Caco-2 (cell line): ENCODE measurements at regions of chr7 and their contacts with region 1.

Region 1: GRCh38 chr7:87933945-87934698 is at the start of gene ADAM22:
- DNase-seq: peak; percentile 90
- H3K4me3 ChIP-seq: peak within 1 kb of the TSS; percentile 81
- H3K4me3 Mint-ChIP-seq: peak within 1 kb of the TSS; percentile 91
- H3K27ac Mint-ChIP-seq: peak within 1 kb of the TSS; percentile 52
- H3K4me1 ChIP-seq: peaks cover 12% of the 10 kb centered on the region
- H3K4me1 Mint-ChIP-seq: peaks cover 12% of the 10 kb centered on the region
- H3K27me3 ChIP-seq: no peaks in the 10 kb centered on the region
- H3K27me3 Mint-ChIP-seq: peaks cover 8% of the 10 kb centered on the region
- CTCF ChIP-seq: no peak
- total RNA-seq, gene ADAM22: 10.1 and 15.7 TPM in 2 replicates

Region 2: DNA sequence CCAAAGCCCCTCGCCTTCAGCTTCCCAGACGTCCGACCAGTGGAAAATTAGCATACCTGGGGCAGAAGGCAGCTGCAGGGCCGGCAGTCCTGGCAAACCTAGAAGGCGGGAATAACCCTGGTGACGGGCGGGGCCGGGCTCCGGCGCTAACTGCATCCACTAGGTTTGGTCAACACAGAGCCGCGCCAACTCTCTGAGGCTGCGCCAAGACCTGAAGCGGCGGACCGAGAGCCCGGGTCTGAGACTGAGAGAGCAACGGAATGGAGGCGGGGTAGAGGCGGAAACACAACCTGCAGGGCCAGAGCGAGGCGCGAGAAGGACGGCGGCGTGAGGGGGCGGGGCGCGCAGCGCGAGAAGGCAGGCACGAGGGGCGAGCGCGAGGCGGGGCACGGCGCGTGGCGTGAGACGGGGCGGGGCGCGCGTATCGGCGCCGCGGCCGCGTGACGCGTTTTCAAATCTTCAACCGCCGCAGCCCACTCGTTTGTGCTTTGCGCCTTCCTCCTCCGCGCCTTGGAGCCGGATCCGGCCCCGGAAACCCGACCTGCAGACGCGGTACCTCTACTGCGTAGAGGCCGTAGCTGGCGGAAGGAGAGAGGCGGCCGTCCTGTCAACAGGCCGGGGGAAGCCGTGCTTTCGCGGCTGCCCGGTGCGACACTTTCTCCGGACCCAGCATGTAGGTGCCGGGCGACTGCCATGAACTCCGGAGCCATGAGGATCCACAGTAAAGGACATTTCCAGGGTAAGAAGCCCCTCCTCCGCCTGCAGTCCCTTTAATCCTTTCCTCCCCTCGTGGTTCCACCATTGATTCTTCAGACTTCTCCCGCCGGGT is 57.9 kb before region 1 on chr7 and contains the starts of genes DBF4 and SLC25A40:
- CTCF ChIA-PET with region 1: no interaction called
- POLR2A ChIA-PET with region 1: no interaction called
- intact Hi-C with region 1: loop called (anchors 1 kb)
- DNase-seq: peak; percentile 98 to 99
- H3K4me3 ChIP-seq: peak within 1 kb of the TSS; percentile 61
- H3K4me3 Mint-ChIP-seq: peak within 1 kb of the TSS; percentile 70
- H3K27ac Mint-ChIP-seq: peak within 1 kb of the TSS; percentile 99
- H3K4me1 ChIP-seq: peaks cover 20% of the 10 kb centered on the region
- H3K4me1 Mint-ChIP-seq: peaks cover 28% of the 10 kb centered on the region
- H3K27me3 ChIP-seq: no peaks in the 10 kb centered on the region
- H3K27me3 Mint-ChIP-seq: no peaks in the 10 kb centered on the region
- CTCF ChIP-seq: no peak
- total RNA-seq, gene DBF4: 55.0 and 62.8 TPM in 2 replicates
- total RNA-seq, gene SLC25A40: 21.1 and 21.8 TPM in 2 replicates

Region 3: GRCh38 chr7:87895363-87895762 is 38.8 kb before region 1 on chr7:
- CTCF ChIA-PET with region 1: no interaction called
- POLR2A ChIA-PET with region 1: no interaction called
- intact Hi-C with region 1: no loop called
- DNase-seq: no peak
- H3K4me3 ChIP-seq: no peak overlapping the region
- H3K4me3 Mint-ChIP-seq: no peak overlapping the region
- H3K27ac Mint-ChIP-seq: no peak overlapping the region
- H3K4me1 ChIP-seq: no peaks in the 10 kb centered on the region
- H3K4me1 Mint-ChIP-seq: peaks cover 7% of the 10 kb centered on the region
- H3K27me3 ChIP-seq: no peaks in the 10 kb centered on the region
- H3K27me3 Mint-ChIP-seq: no peaks in the 10 kb centered on the region
- CTCF ChIP-seq: no peak

Region 4: GRCh38 chr7:87910138-87910537 is 24.0 kb before region 1 on chr7:
- CTCF ChIA-PET with region 1: interaction called, 3 read pairs
- POLR2A ChIA-PET with region 1: no interaction called
- intact Hi-C with region 1: loop called (anchors 2 kb)
- DNase-seq: no peak
- H3K4me3 ChIP-seq: no peak overlapping the region
- H3K4me3 Mint-ChIP-seq: no peak overlapping the region
- H3K27ac Mint-ChIP-seq: no peak overlapping the region
- H3K4me1 ChIP-seq: peaks cover 19% of the 10 kb centered on the region
- H3K4me1 Mint-ChIP-seq: peaks cover 7% of the 10 kb centered on the region
- H3K27me3 ChIP-seq: no peaks in the 10 kb centered on the region
- H3K27me3 Mint-ChIP-seq: no peaks in the 10 kb centered on the region
- CTCF ChIP-seq: no peak

Region 5: DNA sequence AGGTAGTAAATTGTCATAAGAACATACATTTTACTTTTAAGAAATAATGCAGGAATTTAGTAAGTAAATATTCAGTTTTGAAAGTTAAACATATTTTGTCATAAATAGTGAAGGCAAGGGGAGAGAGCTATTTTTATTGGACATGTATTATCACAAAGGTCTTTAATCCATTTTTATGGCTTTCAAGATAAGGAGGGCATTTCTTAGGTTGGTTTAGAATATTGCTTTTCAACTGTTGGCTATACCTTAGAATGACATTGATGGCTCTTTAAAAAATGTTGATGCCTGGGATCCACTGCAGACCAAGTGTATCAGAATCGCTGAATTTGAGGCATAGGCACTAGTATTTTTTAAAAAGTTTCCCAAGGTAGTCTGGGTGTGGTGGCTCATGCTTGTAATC is 33.9 kb after region 1 on chr7:
- CTCF ChIA-PET with region 1: no interaction called
- POLR2A ChIA-PET with region 1: interaction called, 3 read pairs
- intact Hi-C with region 1: loop called (anchors 1 kb)
- DNase-seq: peak in 1 of 2 experiments; percentile 25
- H3K4me3 ChIP-seq: no peak overlapping the region
- H3K4me3 Mint-ChIP-seq: no peak overlapping the region
- H3K27ac Mint-ChIP-seq: peak overlapping the region; percentile 56
- H3K4me1 ChIP-seq: peaks cover 16% of the 10 kb centered on the region
- H3K4me1 Mint-ChIP-seq: peaks cover 17% of the 10 kb centered on the region
- H3K27me3 ChIP-seq: no peaks in the 10 kb centered on the region
- H3K27me3 Mint-ChIP-seq: no peaks in the 10 kb centered on the region
- CTCF ChIP-seq: no peak

Region 6: GRCh38 chr7:88057655-88058054 is 123.5 kb after region 1 on chr7:
- CTCF ChIA-PET with region 1: no interaction called
- POLR2A ChIA-PET with region 1: no interaction called
- intact Hi-C with region 1: loop called (anchors 5 kb)
- DNase-seq: no peak
- H3K4me3 ChIP-seq: no peak overlapping the region
- H3K4me3 Mint-ChIP-seq: no peak overlapping the region
- H3K27ac Mint-ChIP-seq: no peak overlapping the region
- H3K4me1 ChIP-seq: no peaks in the 10 kb centered on the region
- H3K4me1 Mint-ChIP-seq: peaks cover 10% of the 10 kb centered on the region
- H3K27me3 ChIP-seq: no peaks in the 10 kb centered on the region
- H3K27me3 Mint-ChIP-seq: no peaks in the 10 kb centered on the region
- CTCF ChIP-seq: no peak

Region 7: DNA sequence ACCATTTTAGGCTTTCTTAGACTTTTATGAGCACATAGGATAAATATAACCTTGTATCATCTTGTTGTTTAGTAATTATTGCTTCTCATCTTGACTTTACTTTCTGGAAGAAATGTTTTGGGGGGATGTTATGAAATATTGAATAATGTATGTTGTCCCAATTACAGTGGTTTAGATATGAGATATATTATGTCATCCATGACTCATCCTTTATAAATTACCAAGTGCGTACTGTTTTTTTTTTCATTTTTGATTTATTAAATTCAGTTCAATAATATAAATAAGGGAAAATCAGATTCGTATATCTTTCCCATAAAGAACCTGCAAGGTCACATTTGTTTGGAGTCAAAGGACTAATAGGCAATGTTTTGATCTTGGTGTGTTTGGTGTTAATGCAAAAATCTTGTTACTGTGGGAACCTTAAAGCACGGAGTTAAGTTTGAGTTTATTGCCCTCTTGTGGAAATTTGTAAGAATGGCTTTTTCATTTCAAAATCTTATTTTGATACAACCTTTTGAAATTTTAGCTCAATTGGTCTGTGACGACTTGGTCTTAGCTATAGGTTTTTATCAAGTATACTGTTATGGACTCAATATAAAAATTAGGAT is 177.1 kb after region 1 on chr7:
- CTCF ChIA-PET with region 1: no interaction called
- POLR2A ChIA-PET with region 1: no interaction called
- intact Hi-C with region 1: loop called (anchors 1 kb)
- DNase-seq: peak in 1 of 2 experiments; percentile 24
- H3K4me3 ChIP-seq: no peak overlapping the region
- H3K4me3 Mint-ChIP-seq: no peak overlapping the region
- H3K27ac Mint-ChIP-seq: no peak overlapping the region
- H3K4me1 ChIP-seq: no peaks in the 10 kb centered on the region
- H3K4me1 Mint-ChIP-seq: no peaks in the 10 kb centered on the region
- H3K27me3 ChIP-seq: no peaks in the 10 kb centered on the region
- H3K27me3 Mint-ChIP-seq: no peaks in the 10 kb centered on the region
- CTCF ChIP-seq: peak; percentile 34 to 63